Esophagus squamous epithelium (tissue), 5 donors: ENCODE measurements at regions of chr2 and their contacts with region 1.

Region 1: GRCh38 chr2:201451292-201452057 is at the starts of genes STRADB and TRAK2:
- DNase-seq: peak; percentile 70
- H3K4me3 ChIP-seq: peak within 1 kb of the TSS; percentile 57 to 97 (median 74)
- H3K27ac ChIP-seq: peak within 1 kb of the TSS; percentile 91 to 94 (median 92)
- H3K4me1 ChIP-seq: peaks cover 24 to 59% (median 24%) of the 10 kb centered on the region in 3 donors
- H3K27me3 ChIP-seq: no peaks in the 10 kb centered on the region
- CTCF ChIP-seq: peak in 5 of 6 experiments; percentile 26 to 65 (median 45)
- POLR2A ChIP-seq: peak in 2 of 4 donors; percentile 64 to 84
- total RNA-seq, gene STRADB: 4.8 to 18.2 (median 14.6) TPM
- total RNA-seq, gene TRAK2: 7.9 to 32.8 (median 13.7) TPM

Region 2: GRCh38 chr2:201327678-201328077 is 123.8 kb before region 1 on chr2:
- intact Hi-C with region 1: no loop called
- DNase-seq: no peak
- H3K4me3 ChIP-seq: no peak overlapping the region
- H3K27ac ChIP-seq: no peak overlapping the region
- H3K4me1 ChIP-seq: no peaks in the 10 kb centered on the region
- H3K27me3 ChIP-seq: no peaks in the 10 kb centered on the region
- CTCF ChIP-seq: no peak
- POLR2A ChIP-seq: no peak

Region 3: GRCh38 chr2:201406077-201406662 is 45.3 kb before region 1 on chr2:
- intact Hi-C with region 1: loop called (anchors 10 kb)
- DNase-seq: no peak
- H3K4me3 ChIP-seq: no peak overlapping the region
- H3K27ac ChIP-seq: peak overlapping the region in 2 of 4 donors; percentile 48 to 73
- H3K4me1 ChIP-seq: peaks cover 5 to 50% (median 32%) of the 10 kb centered on the region in 3 donors
- H3K27me3 ChIP-seq: no peaks in the 10 kb centered on the region
- CTCF ChIP-seq: no peak
- POLR2A ChIP-seq: no peak